CD14-positive monocyte (primary cell): ENCODE measurements at regions of chr2 and their contacts with region 1.

Region 1: GRCh38 chr2:236512902-236513435 is 56.7 kb upstream of the ACKR3 start:
- DNase-seq: peak; percentile 38 to 66 (median 55)
- H3K4me3 ChIP-seq: no peak overlapping the region
- H3K4me3 Mint-ChIP-seq: no peak overlapping the region
- H3K27ac ChIP-seq: no peak overlapping the region
- H3K27ac Mint-ChIP-seq: no peak overlapping the region
- H3K4me1 ChIP-seq: peaks cover 0 to 5% of the 10 kb centered on the region in 2 donors
- H3K4me1 Mint-ChIP-seq: peaks cover 8% of the 10 kb centered on the region
- H3K27me3 ChIP-seq: peaks cover 8% of the 10 kb centered on the region in 2 donors
- H3K27me3 Mint-ChIP-seq: peaks cover 14 to 20% (median 16%) of the 10 kb centered on the region in 3 donors
- CTCF ChIP-seq: peak; percentile 83

Region 2: DNA sequence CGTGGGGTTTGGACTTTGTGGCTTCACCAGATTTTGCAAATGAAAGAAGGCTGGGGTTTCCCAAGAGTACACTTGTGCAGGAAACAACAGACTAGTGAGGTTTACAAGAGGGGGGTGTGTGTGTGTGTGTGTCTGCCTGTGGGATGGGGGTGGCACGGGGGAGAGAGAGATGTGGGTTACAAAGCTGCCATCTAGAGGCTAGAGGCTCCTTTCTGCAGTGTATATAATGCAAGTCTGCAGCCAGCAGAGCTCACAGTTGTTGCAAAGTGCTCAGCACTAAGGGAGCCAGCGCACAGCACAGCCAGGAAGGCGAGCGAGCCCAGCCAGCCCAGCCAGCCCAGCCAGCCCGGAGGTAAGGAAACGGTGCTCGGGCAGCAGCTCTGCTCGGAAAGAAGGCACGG is 56.6 kb after region 1 on chr2 and contains the start of gene ACKR3:
- intact Hi-C with region 1: loop called in 1 of 2 experiments (anchors 10 kb)
- DNase-seq: peak; percentile 32 to 71 (median 52)
- H3K4me3 ChIP-seq: peak within 1 kb of the TSS; percentile 37 to 81 (median 48)
- H3K4me3 Mint-ChIP-seq: peak within 1 kb of the TSS; percentile 91 to 97
- H3K27ac ChIP-seq: no peak within 1 kb of the TSS
- H3K27ac Mint-ChIP-seq: no peak within 1 kb of the TSS
- H3K4me1 ChIP-seq: peaks cover 35 to 59% of the 10 kb centered on the region in 2 donors
- H3K4me1 Mint-ChIP-seq: peaks cover 61% of the 10 kb centered on the region
- H3K27me3 ChIP-seq: no peaks in the 10 kb centered on the region
- H3K27me3 Mint-ChIP-seq: peaks cover 7 to 15% (median 7%) of the 10 kb centered on the region in 3 donors
- CTCF ChIP-seq: peak; percentile 21
- polyA plus RNA-seq, gene ACKR3: 0.41 to 13.3 (median 0.79) TPM

Region 3: GRCh38 chr2:237026981-237027711 is 514.2 kb after region 1 on chr2:
- intact Hi-C with region 1: loop called in 1 of 2 experiments (anchors 5 kb)
- DNase-seq: peak; percentile 32 to 62 (median 52)
- H3K4me3 ChIP-seq: no peak overlapping the region
- H3K4me3 Mint-ChIP-seq: no peak overlapping the region
- H3K27ac ChIP-seq: no peak overlapping the region
- H3K27ac Mint-ChIP-seq: no peak overlapping the region
- H3K4me1 ChIP-seq: no peaks in the 10 kb centered on the region
- H3K4me1 Mint-ChIP-seq: no peaks in the 10 kb centered on the region
- H3K27me3 ChIP-seq: no peaks in the 10 kb centered on the region
- H3K27me3 Mint-ChIP-seq: peaks cover 6 to 10% (median 9%) of the 10 kb centered on the region in 3 donors
- CTCF ChIP-seq: peak; percentile 76

Region 4: DNA sequence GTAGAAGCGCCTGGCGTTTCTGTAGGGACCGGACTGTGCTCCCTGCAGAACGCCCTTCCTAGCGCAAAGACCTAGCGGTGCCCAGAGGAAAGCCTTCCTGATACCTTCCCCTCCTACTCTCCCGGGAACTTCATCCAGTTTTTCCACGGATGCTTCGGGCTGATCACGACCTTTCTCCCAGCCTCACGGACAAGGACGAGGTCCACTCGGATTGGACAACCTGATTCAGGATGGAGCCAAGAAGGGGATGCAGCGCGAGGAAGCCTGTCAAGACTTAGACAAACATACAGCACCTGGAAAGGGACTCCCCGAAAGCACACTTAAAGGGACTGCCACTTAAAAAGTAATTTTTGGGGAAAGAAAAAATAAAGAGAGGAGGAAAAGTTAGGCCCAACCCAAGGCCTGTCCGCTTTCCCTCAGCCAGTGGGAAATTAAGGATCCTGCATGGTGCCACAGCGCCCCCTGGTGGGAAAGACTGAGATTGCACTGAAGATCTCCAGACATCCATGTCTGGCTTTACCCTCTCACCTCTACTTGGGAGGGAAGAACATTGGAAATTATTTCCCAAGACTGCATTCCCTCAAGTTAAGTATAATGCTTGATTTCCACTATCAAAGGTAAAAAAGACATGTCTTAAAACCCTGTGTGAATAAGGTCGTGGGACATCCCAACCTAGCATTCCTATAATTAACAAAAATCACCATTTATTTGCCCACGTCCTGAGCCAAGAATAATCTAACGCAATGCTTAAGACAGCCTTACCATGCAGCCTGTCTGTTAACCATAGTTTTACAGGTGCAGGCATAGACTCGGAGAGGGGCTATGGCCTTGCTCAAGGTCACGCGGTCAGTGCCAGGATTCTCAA is 559.3 kb after region 1 on chr2:
- intact Hi-C with region 1: loop called (anchors 5 kb)
- DNase-seq: peak; percentile 46 to 59 (median 56)
- H3K4me3 ChIP-seq: no peak overlapping the region
- H3K4me3 Mint-ChIP-seq: no peak overlapping the region
- H3K27ac ChIP-seq: no peak overlapping the region
- H3K27ac Mint-ChIP-seq: peak overlapping the region in 1 of 7 donors; percentile 4
- H3K4me1 ChIP-seq: no peaks in the 10 kb centered on the region
- H3K4me1 Mint-ChIP-seq: peaks cover 9% of the 10 kb centered on the region
- H3K27me3 ChIP-seq: no peaks in the 10 kb centered on the region
- H3K27me3 Mint-ChIP-seq: peaks cover 0 to 1% (median 0%) of the 10 kb centered on the region in 3 donors
- CTCF ChIP-seq: peak; percentile 99